Naive thymus-derived CD4-positive, alpha-beta T cell (primary cell): ENCODE measurements at regions of chr6 and their contacts with region 1.

Region 1: GRCh38 chr6:158958504-158959386 is 41.3 kb downstream of the RSPH3 start:
- DNase-seq: peak in 5 of 9 donors; percentile 14 to 30 (median 22)
- ATAC-seq: peak; percentile 64
- H3K4me3 ChIP-seq: no peak overlapping the region
- H3K4me3 Mint-ChIP-seq: no peak overlapping the region
- H3K27ac ChIP-seq: no peak overlapping the region
- H3K27ac Mint-ChIP-seq: peak overlapping the region in 1 of 9 donors; percentile 40
- H3K4me1 ChIP-seq: no peaks in the 10 kb centered on the region
- H3K4me1 Mint-ChIP-seq: peaks cover 0 to 13% (median 0%) of the 10 kb centered on the region in 7 donors
- H3K27me3 ChIP-seq: no peaks in the 10 kb centered on the region
- H3K27me3 Mint-ChIP-seq: peaks cover 0 to 4% (median 0%) of the 10 kb centered on the region in 5 donors

Region 2: GRCh38 chr6:158704181-158704822 is 254.4 kb before region 1 on chr6:
- CTCF ChIA-PET with region 1: interaction called, 8 read pairs
- POLR2A ChIA-PET with region 1: no interaction called
- intact Hi-C with region 1: loop called in 1 of 2 experiments (anchors 1 kb)
- DNase-seq: peak; percentile 55 to 85 (median 74)
- ATAC-seq: peak; percentile 98
- H3K4me3 ChIP-seq: peak overlapping the region; percentile 60
- H3K4me3 Mint-ChIP-seq: peak overlapping the region; percentile 73 to 90 (median 84)
- H3K27ac ChIP-seq: peak overlapping the region; percentile 35
- H3K27ac Mint-ChIP-seq: peak overlapping the region in 8 of 9 donors; percentile 14 to 84 (median 64)
- H3K4me1 ChIP-seq: peaks cover 8 to 9% of the 10 kb centered on the region in 2 donors
- H3K4me1 Mint-ChIP-seq: peaks cover 7 to 27% (median 15%) of the 10 kb centered on the region in 7 donors
- H3K27me3 ChIP-seq: no peaks in the 10 kb centered on the region
- H3K27me3 Mint-ChIP-seq: no peaks in the 10 kb centered on the region

Region 3: GRCh38 chr6:160505970-160506369 is 1547.2 kb after region 1 on chr6:
- CTCF ChIA-PET with region 1: no interaction called
- POLR2A ChIA-PET with region 1: no interaction called
- intact Hi-C with region 1: no loop called
- DNase-seq: no peak
- ATAC-seq: no peak
- H3K4me3 ChIP-seq: no peak overlapping the region
- H3K4me3 Mint-ChIP-seq: no peak overlapping the region
- H3K27ac ChIP-seq: no peak overlapping the region
- H3K27ac Mint-ChIP-seq: no peak overlapping the region
- H3K4me1 ChIP-seq: no peaks in the 10 kb centered on the region
- H3K4me1 Mint-ChIP-seq: peaks cover 0 to 9% (median 2%) of the 10 kb centered on the region in 7 donors
- H3K27me3 ChIP-seq: no peaks in the 10 kb centered on the region
- H3K27me3 Mint-ChIP-seq: peaks cover 0 to 30% (median 0%) of the 10 kb centered on the region in 5 donors